Panc1 (cell line): ENCODE measurements at regions of chr17 and their contacts with region 1.

Region 1: GRCh38 chr17:29420128-29420527 is 30.0 kb downstream of the TAOK1 start:
- DNase-seq: no peak
- ATAC-seq: no peak
- H3K4me3 ChIP-seq: no peak overlapping the region
- H3K27ac ChIP-seq: no peak overlapping the region
- H3K4me1 ChIP-seq: no peaks in the 10 kb centered on the region
- H3K27me3 ChIP-seq: no peaks in the 10 kb centered on the region
- CTCF ChIP-seq: no peak

Region 2: DNA sequence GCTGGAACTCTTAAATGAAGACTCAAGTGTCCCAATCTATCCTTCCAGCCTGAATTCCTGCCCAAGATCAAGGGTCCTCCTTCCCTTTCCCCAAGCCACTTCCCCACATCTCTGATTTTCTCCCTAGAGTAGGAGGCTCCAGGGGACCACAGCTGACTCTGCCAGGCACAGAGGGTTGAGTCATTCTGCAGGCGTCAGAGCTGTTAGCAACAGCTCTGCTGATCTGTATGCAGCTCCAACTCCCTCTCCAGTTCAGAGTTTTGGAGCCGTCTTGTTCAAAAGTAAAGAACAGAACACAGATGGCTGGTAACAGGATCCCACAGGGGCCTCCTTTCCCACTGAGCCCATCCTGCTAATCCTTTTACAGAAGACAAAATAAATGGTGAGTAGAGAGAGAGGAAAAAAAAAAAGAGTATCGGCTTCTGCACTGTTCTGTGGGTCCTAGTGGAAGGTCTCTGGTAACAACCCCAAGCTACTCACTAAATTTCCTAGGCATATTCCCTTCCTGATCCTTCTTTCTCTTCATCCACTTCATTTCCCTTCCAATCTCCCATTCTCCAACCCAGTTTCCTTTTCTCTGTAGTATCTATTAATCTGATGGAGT is 43.4 kb before region 1 on chr17:
- CTCF ChIA-PET with region 1: no interaction called
- POLR2A ChIA-PET with region 1: interaction called, 12 read pairs
- in situ Hi-C with region 1: no loop called
- intact Hi-C with region 1: no loop called
- DNase-seq: no peak
- ATAC-seq: peak; percentile 72; the same call in 1 of the 2 replicates
- H3K4me3 ChIP-seq: no peak overlapping the region
- H3K27ac ChIP-seq: no peak overlapping the region
- H3K4me1 ChIP-seq: peaks cover 6% of the 10 kb centered on the region; the same call in 1 of the 2 replicates
- H3K27me3 ChIP-seq: no peaks in the 10 kb centered on the region
- CTCF ChIP-seq: no peak

Region 3: GRCh38 chr17:29434550-29434949 is 14.4 kb after region 1 on chr17:
- CTCF ChIA-PET with region 1: no interaction called
- POLR2A ChIA-PET with region 1: no interaction called
- in situ Hi-C with region 1: no loop called
- intact Hi-C with region 1: no loop called
- DNase-seq: no peak
- ATAC-seq: no peak
- H3K4me3 ChIP-seq: no peak overlapping the region
- H3K27ac ChIP-seq: no peak overlapping the region
- H3K4me1 ChIP-seq: peaks cover 6% of the 10 kb centered on the region; the same call in 1 of the 2 replicates
- H3K27me3 ChIP-seq: no peaks in the 10 kb centered on the region
- CTCF ChIP-seq: no peak

Region 4: GRCh38 chr17:29451121-29451742 is 31.1 kb after region 1 on chr17:
- CTCF ChIA-PET with region 1: no interaction called
- POLR2A ChIA-PET with region 1: no interaction called
- in situ Hi-C with region 1: no loop called
- intact Hi-C with region 1: no loop called
- DNase-seq: no peak
- ATAC-seq: no peak
- H3K4me3 ChIP-seq: no peak overlapping the region
- H3K27ac ChIP-seq: no peak overlapping the region
- H3K4me1 ChIP-seq: no peaks in the 10 kb centered on the region
- H3K27me3 ChIP-seq: no peaks in the 10 kb centered on the region
- CTCF ChIP-seq: no peak